Posterior cingulate gyrus (tissue), 11 donors: ENCODE measurements at regions of chr7 and their contacts with region 1.

Region 1: DNA sequence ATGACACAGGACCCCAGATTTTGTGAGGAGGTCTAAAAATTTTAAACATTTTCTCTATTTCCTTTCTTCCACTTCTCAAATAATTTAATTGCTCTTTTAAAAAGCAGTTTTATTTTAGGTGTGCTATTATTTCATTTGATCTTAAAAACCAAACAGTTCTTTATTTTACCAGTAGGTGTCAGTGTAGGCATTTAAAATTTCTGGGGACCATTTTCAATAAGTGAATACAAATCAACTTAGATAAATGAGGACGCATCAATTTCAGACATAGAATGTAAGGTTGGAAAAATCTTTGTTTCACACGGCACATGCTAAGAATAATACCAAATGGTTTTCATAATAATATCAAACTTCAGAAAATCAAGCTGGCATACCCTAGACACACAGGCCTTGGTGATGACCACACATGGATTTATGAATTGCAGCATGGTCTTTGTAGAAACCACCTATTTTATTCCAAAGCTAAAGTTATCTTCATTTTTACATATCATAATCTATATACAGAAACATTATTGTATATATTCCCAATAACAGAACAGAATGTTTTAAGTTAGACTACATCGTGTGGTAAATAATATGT is 127.6 kb upstream of the SLC26A5 start:
- DNase-seq: no peak

Region 2: GRCh38 chr7:103532955-103533354 is 40.6 kb before region 1 on chr7:
- intact Hi-C with region 1: no loop called
- DNase-seq: peak in 2 of 10 donors; percentile 31 to 46

Region 3: DNA sequence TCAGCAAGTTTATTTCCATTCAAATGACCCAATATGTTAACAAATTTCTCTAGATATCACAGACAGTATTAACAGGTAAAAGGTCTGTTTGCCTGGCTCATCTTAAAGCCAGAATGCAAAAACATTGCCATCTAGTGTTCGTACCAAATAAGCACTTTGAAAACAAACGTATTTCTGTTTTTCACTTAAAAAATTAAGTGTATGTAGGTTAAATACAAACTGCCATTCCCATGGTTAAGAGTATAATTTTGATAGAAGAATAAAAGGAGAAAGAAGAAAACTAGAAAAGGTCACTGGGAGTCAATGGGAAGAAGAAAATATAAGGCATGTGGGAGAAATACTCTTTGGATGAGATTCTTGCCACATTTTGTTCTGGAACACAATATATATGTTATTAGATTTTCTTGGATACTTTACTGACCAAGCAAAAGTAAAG is 583.3 kb after region 1 on chr7:
- intact Hi-C with region 1: loop called (anchors 2 kb)
- DNase-seq: no peak